ENCODE measurements at regions of chr2 and their contacts with region 1.

Region 1: DNA sequence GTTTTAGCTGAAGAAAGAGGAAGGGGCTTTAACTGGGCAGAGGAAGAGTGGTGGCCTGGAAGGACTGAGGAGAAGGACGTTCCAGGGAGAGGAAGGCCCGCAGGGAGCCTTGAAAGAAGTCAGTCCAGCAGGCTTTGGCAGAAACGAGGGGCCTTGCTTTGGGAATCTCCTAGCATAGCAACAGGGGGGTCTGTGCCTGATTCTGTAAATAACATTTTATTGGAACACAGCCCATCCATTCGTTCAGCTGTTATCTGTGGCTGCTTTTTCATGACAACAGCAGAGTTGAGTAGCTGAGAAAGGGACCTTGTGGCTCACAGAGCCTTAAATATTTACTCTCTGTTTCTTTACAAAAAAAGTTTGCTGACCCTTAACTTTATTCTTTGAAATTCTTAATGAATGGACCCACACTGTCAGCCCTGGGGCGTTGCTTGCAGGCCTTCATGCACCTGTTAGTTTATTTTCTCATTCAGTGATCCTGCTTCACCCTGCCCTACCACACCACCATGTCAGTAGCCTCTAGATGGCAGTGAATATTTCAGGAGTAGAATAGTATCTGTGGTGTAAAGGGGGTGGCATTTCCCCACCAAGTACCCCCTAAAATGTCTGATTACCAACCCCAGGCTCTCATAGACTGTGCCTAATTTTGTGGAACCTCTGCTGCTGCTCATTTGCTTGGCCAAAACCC is 61.0 kb downstream of the MGAT5 start:
- DNase-seq: no peak
- ATAC-seq: peak in 1 of 4 donors; percentile 16
- H3K4me3 ChIP-seq: no peak overlapping the region
- H3K27ac ChIP-seq: no peak overlapping the region
- H3K4me1 ChIP-seq: peaks cover 0 to 10% (median 0%) of the 10 kb centered on the region in 3 donors
- H3K27me3 ChIP-seq: no peaks in the 10 kb centered on the region
- CTCF ChIP-seq: no peak

Region 2: GRCh38 chr2:133886735-133887660 is 427.8 kb before region 1 on chr2:
- intact Hi-C with region 1: no loop called
- DNase-seq: peak; percentile 49 to 76 (median 69)
- ATAC-seq: peak; percentile 85 to 99 (median 94)
- H3K4me3 ChIP-seq: no peak overlapping the region
- H3K27ac ChIP-seq: no peak overlapping the region
- H3K4me1 ChIP-seq: no peaks in the 10 kb centered on the region
- H3K27me3 ChIP-seq: no peaks in the 10 kb centered on the region
- CTCF ChIP-seq: peak; percentile 25 to 51 (median 42)

Region 3: GRCh38 chr2:134268265-134268664 is 46.6 kb before region 1 on chr2:
- intact Hi-C with region 1: loop called in 1 of 3 experiments (anchors 5 kb)
- DNase-seq: peak in 1 of 6 donors; percentile 30
- ATAC-seq: peak; percentile 53 to 70 (median 64)
- H3K4me3 ChIP-seq: no peak overlapping the region
- H3K27ac ChIP-seq: no peak overlapping the region
- H3K4me1 ChIP-seq: no peaks in the 10 kb centered on the region
- H3K27me3 ChIP-seq: no peaks in the 10 kb centered on the region
- CTCF ChIP-seq: no peak